Psoas muscle (tissue), 8 donors: ENCODE measurements at regions of chr17 and their contacts with region 1.

Region 1: DNA sequence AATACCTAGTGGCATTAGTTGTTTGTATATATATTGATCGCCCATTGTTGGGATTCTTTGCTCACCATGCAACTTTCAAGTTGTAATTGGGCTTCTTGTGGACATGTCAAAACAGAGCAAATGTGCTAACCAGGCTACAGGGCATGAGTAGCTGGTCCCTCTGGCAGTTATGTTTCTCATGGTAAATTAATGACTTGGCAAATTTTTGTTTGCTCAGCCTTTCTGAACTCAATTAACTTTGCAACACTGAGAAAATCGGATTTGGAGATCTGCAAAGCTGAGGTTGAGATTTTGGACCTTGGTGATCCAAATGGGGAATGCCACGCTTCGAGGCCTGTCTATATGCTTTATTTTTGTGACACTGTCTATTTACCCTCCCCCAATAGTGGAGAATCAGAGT is 138.5 kb upstream of the PIRT start:
- DNase-seq: no peak
- ATAC-seq: no peak
- H3K4me3 ChIP-seq: no peak overlapping the region
- H3K27ac ChIP-seq: no peak overlapping the region
- H3K4me1 ChIP-seq: no peaks in the 10 kb centered on the region
- H3K27me3 ChIP-seq: peaks cover 0 to 2% (median 0%) of the 10 kb centered on the region in 3 donors
- CTCF ChIP-seq: no peak

Region 2: GRCh38 chr17:10992106-10992880 is 15.9 kb after region 1 on chr17:
- intact Hi-C with region 1: loop called in 1 of 2 experiments (anchors 1 kb)
- DNase-seq: peak in 1 of 2 donors; percentile 66
- ATAC-seq: peak in 1 of 4 donors; percentile 30
- H3K4me3 ChIP-seq: no peak overlapping the region
- H3K27ac ChIP-seq: no peak overlapping the region
- H3K4me1 ChIP-seq: no peaks in the 10 kb centered on the region
- H3K27me3 ChIP-seq: no peaks in the 10 kb centered on the region
- CTCF ChIP-seq: no peak